ENCODE measurements at regions of chr2 and their contacts with region 1.

Region 1: DNA sequence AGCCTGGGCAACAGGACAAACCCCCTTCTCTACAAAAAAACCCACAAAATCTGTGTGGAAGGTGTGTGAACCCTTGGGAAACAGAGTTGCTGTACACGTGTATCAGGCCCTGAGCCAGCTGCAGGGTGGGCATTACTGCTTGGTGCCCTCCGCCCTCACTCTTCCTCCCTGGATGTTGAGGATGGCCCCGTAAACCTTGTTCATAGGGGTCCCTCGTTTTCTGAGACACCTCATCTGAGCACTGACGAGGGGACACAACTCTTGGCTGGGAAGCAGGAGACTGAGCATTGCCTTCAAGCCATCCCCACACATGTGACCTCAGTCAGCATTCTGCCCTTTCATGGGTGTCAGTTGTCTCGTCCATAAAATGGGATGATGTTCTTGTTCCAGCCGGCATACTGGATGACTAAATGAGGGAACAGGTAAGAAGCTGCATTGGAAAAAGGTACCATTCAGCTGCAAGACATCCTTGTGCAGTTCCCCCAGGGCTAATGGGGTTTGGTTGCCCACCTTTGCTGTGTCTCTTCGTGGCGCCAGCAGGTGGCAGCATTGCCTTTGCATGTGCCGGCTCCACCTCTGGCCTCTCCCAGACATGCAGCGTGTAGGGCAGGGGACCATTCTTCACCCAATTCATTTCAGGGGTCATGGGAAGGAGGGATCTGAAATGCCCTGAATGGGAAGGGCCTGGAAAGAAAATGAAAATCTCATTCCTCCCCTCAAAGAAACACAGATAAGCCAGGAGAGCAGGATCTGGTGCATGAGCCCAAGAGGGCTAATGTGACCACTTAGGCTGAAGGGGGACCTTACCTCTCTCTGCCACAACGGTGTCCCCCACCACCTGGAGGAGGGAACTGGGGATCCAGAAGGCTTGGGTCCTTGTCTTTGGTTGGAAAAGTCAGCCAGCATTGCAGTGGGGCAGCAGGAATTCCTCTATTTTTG is 36.4 kb upstream of the HAAO start:
- DNase-seq: peak; percentile 54
- ATAC-seq: peak; percentile 86
- H3K4me3 ChIP-seq: no peak overlapping the region
- H3K27ac ChIP-seq: no peak overlapping the region
- H3K4me1 ChIP-seq: peaks cover 0 to 12% of the 10 kb centered on the region in 2 experiments; a peak in 1 of 4 replicates
- H3K27me3 ChIP-seq: no peaks in the 10 kb centered on the region
- CTCF ChIP-seq: peak; percentile 75 to 92 (median 90)
- POLR2A ChIP-seq: no peak
- RAD21 ChIP-seq: peak; percentile 82

Region 2: GRCh38 chr2:43131024-43131889 is 302.5 kb after region 1 on chr2:
- CTCF ChIA-PET with region 1: no interaction called
- POLR2A ChIA-PET with region 1: no interaction called
- RAD21 ChIA-PET with region 1: no interaction called
- intact Hi-C with region 1: loop called (anchors 1 kb)
- DNase-seq: peak; percentile 89
- ATAC-seq: peak; percentile 80
- H3K4me3 ChIP-seq: peak overlapping the region; percentile 25 to 41
- H3K27ac ChIP-seq: peak overlapping the region; percentile 65
- H3K4me1 ChIP-seq: peaks cover 20 to 23% of the 10 kb centered on the region in 2 experiments
- H3K27me3 ChIP-seq: no peaks in the 10 kb centered on the region
- CTCF ChIP-seq: peak in 2 of 3 experiments; percentile 62 to 71; a peak in 4 of 6 replicates
- POLR2A ChIP-seq: no peak
- RAD21 ChIP-seq: no peak

Region 3: GRCh38 chr2:43542285-43542937 is 713.7 kb after region 1 on chr2:
- CTCF ChIA-PET with region 1: no interaction called
- POLR2A ChIA-PET with region 1: no interaction called
- RAD21 ChIA-PET with region 1: no interaction called
- intact Hi-C with region 1: loop called (anchors 1 kb)
- DNase-seq: peak; percentile 18
- ATAC-seq: peak; percentile 59
- H3K4me3 ChIP-seq: no peak overlapping the region
- H3K27ac ChIP-seq: no peak overlapping the region
- H3K4me1 ChIP-seq: no peaks in the 10 kb centered on the region
- H3K27me3 ChIP-seq: no peaks in the 10 kb centered on the region
- CTCF ChIP-seq: peak; percentile 24 to 60 (median 54); a peak in 3 of 6 replicates
- POLR2A ChIP-seq: no peak
- RAD21 ChIP-seq: peak; percentile 73

Region 4: GRCh38 chr2:43611987-43612894 is 783.5 kb after region 1 on chr2:
- CTCF ChIA-PET with region 1: no interaction called
- POLR2A ChIA-PET with region 1: no interaction called
- RAD21 ChIA-PET with region 1: no interaction called
- intact Hi-C with region 1: loop called (anchors 1 kb)
- DNase-seq: peak; percentile 74
- ATAC-seq: peak; percentile 94
- H3K4me3 ChIP-seq: no peak overlapping the region
- H3K27ac ChIP-seq: no peak overlapping the region
- H3K4me1 ChIP-seq: no peaks in the 10 kb centered on the region
- H3K27me3 ChIP-seq: no peaks in the 10 kb centered on the region
- CTCF ChIP-seq: peak; percentile 54 to 92 (median 92); a peak in 5 of 6 replicates
- POLR2A ChIP-seq: no peak
- RAD21 ChIP-seq: peak; percentile 81

Measured in HCT116 (cell line).